Left ventricle myocardium superior (tissue), 1 donor: ENCODE measurements at regions of chr12 and their contacts with region 1.

Region 1: DNA sequence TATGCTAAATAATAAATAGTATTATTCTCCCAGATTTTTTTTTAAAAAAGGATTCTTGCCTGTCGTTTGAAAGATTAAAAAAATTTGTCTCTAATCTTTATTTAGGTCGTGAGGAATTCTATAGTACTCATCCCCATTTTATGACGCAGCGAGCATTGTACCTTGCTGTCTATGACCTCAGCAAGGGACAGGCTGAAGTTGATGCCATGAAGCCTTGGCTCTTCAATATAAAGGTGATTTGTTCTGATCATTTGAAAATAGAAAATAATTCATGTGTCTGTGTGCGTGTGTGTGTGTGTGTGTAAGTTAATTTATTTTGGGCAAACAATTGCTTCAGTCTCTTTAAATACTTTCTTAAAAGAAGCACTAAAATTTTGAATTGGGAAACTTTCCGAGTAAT is 84.2 kb downstream of the LRRK2 start:
- DNase-seq: no peak
- ATAC-seq: no peak

Region 2: GRCh38 chr12:39935275-39935674 is 373.7 kb before region 1 on chr12:
- intact Hi-C with region 1: no loop called
- DNase-seq: no peak
- ATAC-seq: no peak

Region 3: GRCh38 chr12:40158592-40159111 is 150.3 kb before region 1 on chr12:
- intact Hi-C with region 1: loop called (anchors 5 kb)
- DNase-seq: no peak
- ATAC-seq: peak; percentile 74